Heart left ventricle (tissue), 16 donors: ENCODE measurements at regions of chr18 and their contacts with region 1.

Region 1: DNA sequence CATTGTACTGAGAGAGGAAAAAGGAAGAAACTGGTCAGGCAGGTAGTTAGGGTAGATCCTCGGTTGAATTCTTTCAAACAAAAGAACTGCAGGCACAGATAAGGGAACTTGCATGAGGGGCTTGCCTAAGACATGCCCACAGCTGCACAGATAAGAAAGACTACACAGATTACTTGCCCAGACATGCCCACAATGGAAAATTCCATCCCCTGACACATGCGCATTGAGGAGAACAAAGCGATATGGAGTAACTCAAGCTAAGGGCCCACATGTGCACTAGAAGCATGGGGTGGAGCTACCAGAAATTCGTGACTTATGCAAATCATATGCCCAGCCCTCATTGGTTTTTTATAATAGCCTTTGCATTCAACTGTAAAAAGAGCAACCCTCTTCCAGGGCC is 181.3 kb upstream of the ZNF521 start:
- DNase-seq: no peak
- ATAC-seq: no peak
- H3K4me3 ChIP-seq: no peak overlapping the region
- H3K27ac ChIP-seq: no peak overlapping the region
- H3K4me1 ChIP-seq: no peaks in the 10 kb centered on the region
- H3K27me3 ChIP-seq: no peaks in the 10 kb centered on the region
- CTCF ChIP-seq: no peak
- POLR2A ChIP-seq: no peak

Region 2: DNA sequence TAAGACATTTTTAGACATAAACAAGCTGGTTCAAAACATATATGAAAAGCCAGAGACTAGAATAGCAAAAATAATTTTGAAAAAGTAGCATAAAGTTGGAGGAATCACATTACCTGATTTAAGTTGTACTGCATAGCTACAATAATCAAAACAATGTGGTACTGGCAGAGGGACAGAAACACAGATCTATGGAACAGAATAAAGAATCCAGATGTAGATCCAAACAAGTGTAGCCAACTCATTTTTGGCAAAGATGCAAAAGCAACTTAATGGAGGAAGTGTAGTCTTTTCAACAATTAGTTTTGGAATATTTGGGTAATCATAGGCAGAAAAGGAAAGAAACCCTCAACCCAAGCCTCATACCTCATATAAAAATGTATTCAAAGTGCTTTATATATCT is 97.5 kb after region 1 on chr18:
- intact Hi-C with region 1: loop called in 1 of 10 experiments (anchors 10 kb)
- DNase-seq: no peak
- ATAC-seq: no peak
- H3K4me3 ChIP-seq: no peak overlapping the region
- H3K27ac ChIP-seq: no peak overlapping the region
- H3K4me1 ChIP-seq: no peaks in the 10 kb centered on the region
- H3K27me3 ChIP-seq: no peaks in the 10 kb centered on the region
- CTCF ChIP-seq: no peak
- POLR2A ChIP-seq: no peak

Region 3: DNA sequence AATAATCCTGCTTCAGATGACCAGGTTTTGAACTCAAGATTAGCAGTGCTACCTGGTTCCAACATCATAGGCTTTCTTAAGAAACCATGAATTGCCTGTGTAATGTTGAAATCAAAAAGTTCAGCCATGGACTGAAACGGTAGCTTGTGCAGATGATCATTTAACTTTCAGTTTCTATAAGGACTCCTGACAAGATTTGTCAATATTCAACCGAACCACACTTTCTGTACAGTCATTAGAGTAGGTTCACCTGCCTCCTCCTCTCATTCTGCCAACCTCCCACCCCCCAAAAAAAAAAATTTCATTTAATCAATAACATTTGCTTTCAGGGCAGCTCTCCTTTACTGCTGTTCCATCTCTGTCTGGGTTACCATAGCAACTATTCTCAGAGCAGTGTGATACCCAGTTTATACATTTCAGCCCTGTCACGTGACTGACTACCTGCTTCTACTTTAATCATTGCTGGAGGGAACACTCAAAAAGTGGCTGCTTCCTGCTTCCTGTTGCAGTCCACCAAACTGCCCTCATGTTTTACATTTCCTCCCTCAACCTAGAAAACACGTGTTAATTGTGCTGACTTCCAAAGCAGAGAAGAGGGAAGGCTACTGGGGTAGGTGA is 281.7 kb after region 1 on chr18:
- intact Hi-C with region 1: loop called in 1 of 10 experiments (anchors 10 kb)
- DNase-seq: no peak
- ATAC-seq: no peak
- H3K4me3 ChIP-seq: no peak overlapping the region
- H3K27ac ChIP-seq: no peak overlapping the region
- H3K4me1 ChIP-seq: no peaks in the 10 kb centered on the region
- H3K27me3 ChIP-seq: no peaks in the 10 kb centered on the region
- CTCF ChIP-seq: no peak
- POLR2A ChIP-seq: no peak